K562 (cell line): ENCODE measurements at regions of chr7 and their contacts with region 1.

Region 1: GRCh38 chr7:47266131-47266706 is 315.7 kb downstream of the TNS3 start:
- DNase-seq: peak; percentile 63 to 71 (median 66)
- ATAC-seq: peak; percentile 92
- H3K4me3 ChIP-seq: no peak overlapping the region
- H3K27ac ChIP-seq: no peak overlapping the region
- H3K4me1 ChIP-seq: peaks cover 5 to 7% of the 10 kb centered on the region in 2 experiments; a peak in 2 of 5 replicates
- H3K27me3 ChIP-seq: peaks cover 0 to 6% of the 10 kb centered on the region in 2 experiments; a peak in 1 of 5 replicates
- CTCF ChIP-seq: peak; percentile 78 to 91 (median 89)
- EP300 ChIP-seq: no peak
- POLR2A ChIP-seq: no peak
- RAD21 ChIP-seq: peak; percentile 93

Region 2: DNA sequence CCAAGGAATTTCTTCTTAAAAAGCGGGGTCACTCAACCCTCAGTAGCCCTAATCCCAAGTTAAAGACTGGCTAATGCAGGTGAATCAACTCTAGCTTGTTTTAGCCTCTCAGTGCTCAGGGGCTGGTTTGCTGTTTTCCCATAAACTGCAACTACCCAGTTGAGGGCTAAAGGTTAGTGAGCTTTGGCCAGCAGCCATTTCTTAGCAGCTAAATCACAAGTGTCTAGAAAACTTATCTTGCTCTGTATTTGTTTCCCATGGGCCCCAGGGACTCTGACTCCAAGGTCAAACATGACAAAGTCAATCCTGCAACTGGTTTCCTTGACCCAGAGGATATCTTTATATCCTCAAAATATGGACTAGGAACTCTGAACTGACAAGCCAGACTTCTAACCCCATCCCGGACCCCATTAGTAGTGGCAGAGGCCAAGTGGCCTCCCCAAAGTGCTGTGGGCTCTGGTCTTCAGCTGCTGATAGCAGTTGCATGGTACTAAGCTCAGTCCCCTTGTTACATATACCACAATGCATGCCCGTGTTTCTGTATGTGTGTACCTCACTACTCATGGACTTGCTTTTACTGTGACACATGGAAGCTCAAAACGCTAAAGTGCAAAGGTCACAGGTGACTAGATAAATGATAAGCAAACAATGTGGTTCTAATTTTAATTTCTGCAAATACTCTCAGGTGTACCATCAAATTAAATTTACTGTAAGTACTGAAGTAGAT is 552.2 kb before region 1 on chr7:
- CTCF ChIA-PET with region 1: no interaction called
- POLR2A ChIA-PET with region 1: no interaction called
- in situ Hi-C with region 1: no loop called
- intact Hi-C with region 1: no loop called
- DNase-seq: no peak
- ATAC-seq: no peak
- H3K4me3 ChIP-seq: no peak overlapping the region
- H3K27ac ChIP-seq: no peak overlapping the region
- H3K4me1 ChIP-seq: no peaks in the 10 kb centered on the region
- H3K27me3 ChIP-seq: no peaks in the 10 kb centered on the region
- CTCF ChIP-seq: no peak
- EP300 ChIP-seq: no peak
- POLR2A ChIP-seq: no peak
- RAD21 ChIP-seq: no peak

Region 3: GRCh38 chr7:47435889-47436312 is 169.7 kb after region 1 on chr7:
- CTCF ChIA-PET with region 1: no interaction called
- POLR2A ChIA-PET with region 1: no interaction called
- in situ Hi-C with region 1: no loop called
- intact Hi-C with region 1: loop called (anchors 1 kb)
- DNase-seq: peak; percentile 31 to 66 (median 41)
- ATAC-seq: peak; percentile 97
- H3K4me3 ChIP-seq: no peak overlapping the region
- H3K27ac ChIP-seq: no peak overlapping the region
- H3K4me1 ChIP-seq: no peaks in the 10 kb centered on the region
- H3K27me3 ChIP-seq: peaks cover 3 to 11% of the 10 kb centered on the region in 2 experiments; a peak in 2 of 5 replicates
- CTCF ChIP-seq: peak; percentile 51 to 70 (median 67)
- EP300 ChIP-seq: peak; percentile 88
- POLR2A ChIP-seq: no peak
- RAD21 ChIP-seq: peak; percentile 71 to 73

Region 4: GRCh38 chr7:47807756-47808155 is 541.5 kb after region 1 on chr7:
- CTCF ChIA-PET with region 1: no interaction called
- POLR2A ChIA-PET with region 1: no interaction called
- in situ Hi-C with region 1: no loop called
- intact Hi-C with region 1: loop called (anchors 5 kb)
- DNase-seq: no peak
- ATAC-seq: peak; percentile 69
- H3K4me3 ChIP-seq: no peak overlapping the region
- H3K27ac ChIP-seq: no peak overlapping the region
- H3K4me1 ChIP-seq: no peaks in the 10 kb centered on the region
- H3K27me3 ChIP-seq: peaks cover 3 to 39% of the 10 kb centered on the region in 2 experiments; a peak in 3 of 5 replicates
- CTCF ChIP-seq: peak in 2 of 3 experiments; percentile 32 to 42; a peak in 4 of 6 replicates
- EP300 ChIP-seq: no peak
- POLR2A ChIP-seq: no peak
- RAD21 ChIP-seq: no peak

Region 5: GRCh38 chr7:47818796-47819606 is 552.8 kb after region 1 on chr7:
- CTCF ChIA-PET with region 1: interaction called, 7 read pairs
- POLR2A ChIA-PET with region 1: no interaction called
- in situ Hi-C with region 1: no loop called
- intact Hi-C with region 1: loop called (anchors 1 kb)
- DNase-seq: peak; percentile 45 to 61 (median 54)
- ATAC-seq: peak; percentile 84
- H3K4me3 ChIP-seq: no peak overlapping the region
- H3K27ac ChIP-seq: no peak overlapping the region
- H3K4me1 ChIP-seq: no peaks in the 10 kb centered on the region
- H3K27me3 ChIP-seq: peaks cover 0 to 20% of the 10 kb centered on the region in 2 experiments; a peak in 2 of 5 replicates
- CTCF ChIP-seq: peak; percentile 75 to 92 (median 87)
- EP300 ChIP-seq: no peak
- POLR2A ChIP-seq: no peak
- RAD21 ChIP-seq: peak; percentile 84 to 87

Region 6: DNA sequence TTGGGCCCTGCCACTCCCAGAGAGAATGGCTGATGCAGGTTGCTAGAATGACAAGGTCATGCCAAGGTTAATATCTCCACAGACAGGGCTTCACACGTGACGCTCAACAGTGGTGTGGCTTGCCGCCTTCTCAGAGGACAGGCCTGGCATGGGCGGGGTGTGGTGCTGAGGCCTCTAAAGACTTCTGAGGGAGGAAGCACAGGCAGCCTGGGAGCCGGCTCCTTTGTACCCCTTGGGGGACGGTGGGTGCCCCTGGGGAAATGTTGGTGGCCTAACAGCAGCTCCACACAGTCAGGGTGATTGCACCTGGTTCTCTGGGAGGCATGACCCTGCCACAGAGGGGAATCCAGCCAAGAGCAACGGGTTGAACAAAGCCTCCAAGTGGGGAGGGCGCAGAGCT is 567.0 kb after region 1 on chr7:
- CTCF ChIA-PET with region 1: no interaction called
- POLR2A ChIA-PET with region 1: no interaction called
- in situ Hi-C with region 1: loop called (anchors 5 kb)
- intact Hi-C with region 1: no loop called
- DNase-seq: no peak
- ATAC-seq: no peak
- H3K4me3 ChIP-seq: no peak overlapping the region
- H3K27ac ChIP-seq: no peak overlapping the region
- H3K4me1 ChIP-seq: no peaks in the 10 kb centered on the region
- H3K27me3 ChIP-seq: peaks cover 0 to 46% of the 10 kb centered on the region in 2 experiments; a peak in 3 of 5 replicates
- CTCF ChIP-seq: no peak
- EP300 ChIP-seq: no peak
- POLR2A ChIP-seq: no peak
- RAD21 ChIP-seq: no peak

Region 7: GRCh38 chr7:48109848-48110663 is 843.8 kb after region 1 on chr7:
- CTCF ChIA-PET with region 1: no interaction called
- POLR2A ChIA-PET with region 1: no interaction called
- in situ Hi-C with region 1: no loop called
- intact Hi-C with region 1: loop called (anchors 10 kb)
- DNase-seq: peak; percentile 67 to 84 (median 75)
- ATAC-seq: peak; percentile 82
- H3K4me3 ChIP-seq: no peak overlapping the region
- H3K27ac ChIP-seq: no peak overlapping the region
- H3K4me1 ChIP-seq: peaks cover 0 to 4% of the 10 kb centered on the region in 2 experiments; a peak in 1 of 5 replicates
- H3K27me3 ChIP-seq: peaks cover 0 to 33% of the 10 kb centered on the region in 2 experiments; a peak in 2 of 5 replicates
- CTCF ChIP-seq: peak; percentile 83 to 95 (median 90)
- EP300 ChIP-seq: no peak
- POLR2A ChIP-seq: no peak
- RAD21 ChIP-seq: peak; percentile 93 to 97